Posterior vena cava (tissue), 2 donors: ENCODE measurements at regions of chr6 and their contacts with region 1.

Region 1: GRCh38 chr6:53239526-53239925 is 90.9 kb upstream of the GCM1 start:
- DNase-seq: no peak

Region 2: GRCh38 chr6:54264581-54265272 is 1025.2 kb after region 1 on chr6:
- intact Hi-C with region 1: loop called in 1 of 2 experiments (anchors 5 kb)
- DNase-seq: no peak